ENCODE measurements at regions of chr14 and their contacts with region 1.

Region 1: GRCh38 chr14:100476012-100476822 is 111.0 kb downstream of the BEGAIN start:
- DNase-seq: peak; percentile 95
- ATAC-seq: peak; percentile 99
- H3K4me3 ChIP-seq: peak overlapping the region in 1 of 3 experiments; percentile 29; a peak in 2 of 6 replicates
- H3K27ac ChIP-seq: peak overlapping the region; percentile 37
- H3K4me1 ChIP-seq: peaks cover 22% of the 10 kb centered on the region
- H3K27me3 ChIP-seq: no peaks in the 10 kb centered on the region
- CTCF ChIP-seq: 0 out of 2 replicates have a peak, but pooled peaks have one; percentile 4
- EP300 ChIP-seq: peak in 1 of 2 experiments; percentile 75; a peak in 2 of 4 replicates
- POLR2A ChIP-seq: no peak
- RAD21 ChIP-seq: no peak; the same call in 1 of the 2 replicates

Region 2: GRCh38 chr14:100031536-100032281 is 444.5 kb before region 1 on chr14:
- CTCF ChIA-PET with region 1: no interaction called
- POLR2A ChIA-PET with region 1: no interaction called
- in situ Hi-C with region 1: no loop called
- intact Hi-C with region 1: loop called (anchors 5 kb)
- DNase-seq: no peak
- ATAC-seq: no peak
- H3K4me3 ChIP-seq: no peak overlapping the region
- H3K27ac ChIP-seq: no peak overlapping the region
- H3K4me1 ChIP-seq: peaks cover 10% of the 10 kb centered on the region; the same call in 1 of the 2 replicates
- H3K27me3 ChIP-seq: no peaks in the 10 kb centered on the region
- CTCF ChIP-seq: no peak
- EP300 ChIP-seq: no peak
- POLR2A ChIP-seq: no peak
- RAD21 ChIP-seq: no peak

Region 3: GRCh38 chr14:100278702-100279101 is 197.5 kb before region 1 on chr14:
- CTCF ChIA-PET with region 1: no interaction called
- POLR2A ChIA-PET with region 1: no interaction called
- in situ Hi-C with region 1: no loop called
- intact Hi-C with region 1: no loop called
- DNase-seq: peak; percentile 40
- ATAC-seq: peak; percentile 54
- H3K4me3 ChIP-seq: no peak overlapping the region
- H3K27ac ChIP-seq: peak overlapping the region; percentile 47
- H3K4me1 ChIP-seq: peaks cover 51% of the 10 kb centered on the region
- H3K27me3 ChIP-seq: no peaks in the 10 kb centered on the region
- CTCF ChIP-seq: peak; percentile 21; the same call in 1 of the 2 replicates
- EP300 ChIP-seq: no peak
- POLR2A ChIP-seq: no peak
- RAD21 ChIP-seq: no peak

Region 4: DNA sequence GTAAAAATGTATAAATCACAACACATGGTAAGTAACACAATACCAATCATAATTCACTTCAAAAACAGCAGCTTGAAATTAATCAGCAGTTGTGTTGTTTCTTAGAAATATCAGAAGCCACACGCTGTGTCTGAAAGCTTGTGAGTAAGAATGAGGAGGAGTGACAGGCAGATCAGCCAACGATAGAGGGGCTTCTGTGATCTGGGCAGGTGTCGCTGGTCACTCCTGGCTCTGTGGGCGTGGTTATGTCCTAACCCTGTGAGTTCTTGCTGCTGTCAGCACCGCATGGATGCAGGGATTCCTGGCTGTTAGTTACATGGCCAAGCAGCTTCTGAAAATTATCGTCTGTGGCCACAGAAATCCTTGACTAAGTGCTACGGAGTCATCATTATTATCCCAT is 29.6 kb before region 1 on chr14:
- CTCF ChIA-PET with region 1: no interaction called
- POLR2A ChIA-PET with region 1: no interaction called
- in situ Hi-C with region 1: no loop called
- intact Hi-C with region 1: no loop called
- DNase-seq: no peak
- ATAC-seq: no peak
- H3K4me3 ChIP-seq: no peak overlapping the region
- H3K27ac ChIP-seq: no peak overlapping the region
- H3K4me1 ChIP-seq: no peaks in the 10 kb centered on the region
- H3K27me3 ChIP-seq: no peaks in the 10 kb centered on the region
- CTCF ChIP-seq: no peak
- EP300 ChIP-seq: no peak
- POLR2A ChIP-seq: no peak
- RAD21 ChIP-seq: no peak